ENCODE measurements at regions of chr2 and their contacts with region 1.

Region 1: DNA sequence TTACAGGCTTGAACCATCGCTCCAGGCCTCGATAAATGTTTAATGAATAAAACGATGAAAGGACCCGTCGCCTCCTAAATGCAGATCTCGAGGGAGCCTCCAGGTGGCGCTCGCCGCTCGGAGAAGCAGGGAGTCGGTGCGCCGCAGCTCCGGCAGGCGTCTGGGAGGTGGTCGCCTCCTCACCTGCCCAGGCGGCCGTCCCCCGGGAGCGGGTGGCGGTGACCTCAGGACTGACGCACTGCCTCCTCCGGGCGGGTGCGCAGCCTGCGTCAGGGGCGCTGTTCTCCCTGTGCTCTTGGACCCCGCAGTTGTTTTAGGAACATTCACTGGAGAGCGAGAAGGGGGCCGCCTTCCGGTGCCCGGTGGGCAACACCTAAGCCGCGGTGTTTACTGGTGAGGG is 38.6 kb upstream of the POLE4 start:
- DNase-seq: peak; percentile 69 to 82
- ATAC-seq: peak; percentile 73 to 88
- H3K4me3 ChIP-seq: peak overlapping the region; percentile 53
- H3K27ac ChIP-seq: peak overlapping the region; percentile 12 to 66; a peak in 3 of 6 replicates
- H3K4me1 ChIP-seq: peaks cover 6% of the 10 kb centered on the region
- CTCF ChIP-seq: peak; percentile 98
- EP300 ChIP-seq: no peak
- POLR2A ChIP-seq: no peak
- RAD21 ChIP-seq: peak; percentile 96 to 99

Region 2: DNA sequence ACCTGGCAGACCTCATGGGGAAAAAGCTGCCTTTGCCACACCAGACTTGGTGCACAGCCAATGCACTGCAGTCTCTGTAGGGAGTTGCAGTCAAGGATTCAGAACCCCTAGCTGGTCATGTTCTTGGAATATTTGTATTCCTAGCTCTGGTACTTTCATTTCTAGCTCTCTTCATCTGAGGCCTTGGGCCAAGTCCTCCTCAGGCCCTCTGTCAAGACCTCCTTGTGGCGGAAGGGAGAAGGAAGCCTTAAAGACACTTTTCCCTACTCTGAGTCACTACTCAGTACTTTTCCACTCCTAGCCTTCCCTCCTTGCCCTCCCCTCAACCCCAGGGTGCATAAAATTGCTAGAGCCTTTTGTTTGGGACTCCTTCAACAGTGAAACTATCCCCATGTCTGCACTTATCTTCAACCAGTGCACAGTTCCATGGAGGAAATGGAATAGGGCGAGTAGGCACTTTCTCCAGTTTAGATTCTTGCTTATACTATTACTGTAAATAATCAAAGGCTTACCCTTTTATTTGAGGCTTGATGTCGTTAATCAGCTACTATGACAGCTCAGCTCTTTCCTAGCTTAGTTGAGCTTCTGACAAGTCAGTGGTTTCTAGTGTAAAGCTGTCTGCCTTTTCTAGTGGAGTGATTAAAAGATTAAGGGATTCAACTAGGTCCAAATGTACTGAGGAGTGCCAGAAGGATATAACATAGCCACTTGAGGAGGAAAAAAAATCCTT is 287.5 kb before region 1 on chr2:
- CTCF ChIA-PET with region 1: no interaction called
- POLR2A ChIA-PET with region 1: no interaction called
- DNase-seq: peak; percentile 16 to 51
- ATAC-seq: peak; percentile 92
- H3K4me3 ChIP-seq: no peak overlapping the region
- H3K27ac ChIP-seq: peak overlapping the region in 1 of 2 experiments; percentile 15; a peak in 3 of 6 replicates
- H3K4me1 ChIP-seq: peaks cover 12% of the 10 kb centered on the region; the same call in 2 of the 3 replicates
- CTCF ChIP-seq: no peak
- EP300 ChIP-seq: no peak
- POLR2A ChIP-seq: no peak
- RAD21 ChIP-seq: no peak

Region 3: DNA sequence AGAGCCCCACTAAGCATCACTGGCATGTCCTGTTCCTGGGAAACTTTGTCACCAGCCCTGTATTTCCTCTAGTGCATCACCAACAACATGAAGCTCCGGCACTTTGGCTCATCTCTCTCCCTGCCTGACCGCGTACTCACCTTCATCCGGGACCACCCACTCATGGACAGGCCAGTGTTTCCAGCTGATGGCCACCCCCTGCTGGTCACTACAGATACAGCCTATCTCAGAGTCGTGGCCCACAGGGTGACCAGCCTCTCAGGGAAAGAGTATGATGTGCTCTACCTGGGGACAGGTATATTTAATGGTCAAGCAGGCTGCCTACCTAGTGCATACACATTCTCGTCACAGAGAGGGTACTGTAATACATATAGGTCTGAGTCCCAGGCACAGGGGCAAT is 244.7 kb before region 1 on chr2:
- CTCF ChIA-PET with region 1: no interaction called
- POLR2A ChIA-PET with region 1: no interaction called
- DNase-seq: no peak
- ATAC-seq: peak; percentile 26 to 72; a peak in 3 of 6 replicates
- H3K4me3 ChIP-seq: no peak overlapping the region
- H3K27ac ChIP-seq: no peak overlapping the region
- H3K4me1 ChIP-seq: no peaks in the 10 kb centered on the region
- CTCF ChIP-seq: no peak
- EP300 ChIP-seq: no peak
- POLR2A ChIP-seq: no peak
- RAD21 ChIP-seq: 0 out of 5 replicates have a peak, but pooled peaks of 1 of the 2 experiments have one; percentile 13

Region 4: DNA sequence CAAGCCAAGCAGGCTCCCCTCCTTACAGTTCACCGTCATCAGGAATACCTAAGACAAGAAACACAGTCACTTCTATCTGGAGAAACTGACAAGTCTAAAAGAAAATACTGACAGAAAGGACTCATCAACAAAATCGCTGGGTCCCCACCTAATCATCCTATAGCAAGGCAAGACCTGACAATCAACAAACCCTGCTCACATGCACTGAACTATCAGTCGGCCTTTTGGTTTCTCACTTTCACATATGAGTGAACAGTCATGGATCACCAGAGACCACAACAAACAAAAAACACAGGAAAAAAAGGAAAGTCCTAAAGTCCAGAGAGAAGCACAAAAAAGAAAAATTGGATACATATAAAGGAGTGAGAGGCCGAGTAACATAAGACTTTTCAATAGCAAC is 195.3 kb before region 1 on chr2:
- CTCF ChIA-PET with region 1: no interaction called
- POLR2A ChIA-PET with region 1: no interaction called
- DNase-seq: no peak
- ATAC-seq: no peak; a peak in 1 of 6 replicates
- H3K4me3 ChIP-seq: no peak overlapping the region
- H3K27ac ChIP-seq: no peak overlapping the region
- H3K4me1 ChIP-seq: no peaks in the 10 kb centered on the region
- CTCF ChIP-seq: no peak
- EP300 ChIP-seq: no peak
- POLR2A ChIP-seq: no peak
- RAD21 ChIP-seq: no peak

Region 5: GRCh38 chr2:74834792-74835752 is 84.8 kb before region 1 on chr2:
- CTCF ChIA-PET with region 1: no interaction called
- POLR2A ChIA-PET with region 1: no interaction called
- DNase-seq: peak in 1 of 2 experiments; percentile 31
- ATAC-seq: peak; percentile 37 to 66
- H3K4me3 ChIP-seq: peak overlapping the region; percentile 47
- H3K27ac ChIP-seq: peak overlapping the region; percentile 15 to 79; a peak in 5 of 6 replicates
- H3K4me1 ChIP-seq: peaks cover 7% of the 10 kb centered on the region; the same call in 1 of the 3 replicates
- CTCF ChIP-seq: no peak
- EP300 ChIP-seq: no peak
- POLR2A ChIP-seq: no peak
- RAD21 ChIP-seq: no peak

Region 6: GRCh38 chr2:74887445-74887951 is 32.3 kb before region 1 on chr2:
- CTCF ChIA-PET with region 1: interaction called, 10 read pairs
- POLR2A ChIA-PET with region 1: no interaction called
- DNase-seq: no peak
- ATAC-seq: peak in 1 of 2 experiments; percentile 22; a peak in 2 of 6 replicates
- H3K4me3 ChIP-seq: no peak overlapping the region
- H3K27ac ChIP-seq: no peak overlapping the region
- H3K4me1 ChIP-seq: peaks cover 11% of the 10 kb centered on the region; the same call in 2 of the 3 replicates
- CTCF ChIP-seq: no peak
- EP300 ChIP-seq: no peak
- POLR2A ChIP-seq: no peak
- RAD21 ChIP-seq: no peak

Region 7: GRCh38 chr2:74935975-74936391 is 16.2 kb after region 1 on chr2:
- CTCF ChIA-PET with region 1: interaction called, 25 read pairs
- POLR2A ChIA-PET with region 1: no interaction called
- DNase-seq: no peak
- ATAC-seq: peak in 1 of 2 experiments; percentile 51; a peak in 3 of 6 replicates
- H3K4me3 ChIP-seq: no peak overlapping the region
- H3K27ac ChIP-seq: 0 out of 6 replicates have a peak overlapping the region, but pooled peaks of 1 of the 2 experiments have one; percentile 8
- H3K4me1 ChIP-seq: peaks cover 33% of the 10 kb centered on the region
- CTCF ChIP-seq: no peak
- EP300 ChIP-seq: no peak
- POLR2A ChIP-seq: no peak
- RAD21 ChIP-seq: no peak

Region 8: DNA sequence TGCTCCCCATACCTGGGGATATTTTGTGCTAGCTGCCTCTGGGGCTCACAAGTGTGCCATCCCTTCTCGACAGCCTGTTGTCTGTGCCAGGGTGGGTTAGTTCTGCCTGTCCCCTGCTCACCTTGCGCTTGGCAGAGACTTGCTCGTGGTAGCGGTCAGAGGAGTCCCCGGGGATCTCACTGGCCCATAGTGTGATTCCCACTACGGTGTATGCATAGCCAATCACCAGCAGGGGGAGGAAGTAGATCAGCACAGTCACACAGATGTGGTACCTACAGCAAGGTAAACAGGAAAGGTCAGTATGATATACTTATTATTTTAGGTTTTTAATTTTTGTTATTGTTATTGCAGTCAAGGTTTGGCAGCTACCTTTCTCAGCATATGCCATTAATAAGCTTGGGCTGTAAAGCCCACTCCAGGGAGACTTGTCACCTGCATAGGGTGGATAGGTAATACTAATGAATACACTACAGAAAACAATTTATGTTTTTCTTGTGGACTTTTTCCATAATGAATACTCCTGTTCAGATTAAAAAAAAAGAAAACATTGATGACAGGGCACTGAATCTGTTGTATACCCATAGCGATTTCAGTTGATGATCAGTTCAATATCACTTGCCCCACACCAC is 133.8 kb after region 1 on chr2:
- CTCF ChIA-PET with region 1: interaction called, 20 read pairs
- POLR2A ChIA-PET with region 1: no interaction called
- DNase-seq: peak; percentile 52 to 62
- ATAC-seq: peak; percentile 98 to 100
- H3K4me3 ChIP-seq: no peak overlapping the region
- H3K27ac ChIP-seq: no peak overlapping the region
- H3K4me1 ChIP-seq: no peaks in the 10 kb centered on the region
- CTCF ChIP-seq: peak; percentile 74
- EP300 ChIP-seq: no peak
- POLR2A ChIP-seq: no peak
- RAD21 ChIP-seq: peak; percentile 70 to 83

Region 9: DNA sequence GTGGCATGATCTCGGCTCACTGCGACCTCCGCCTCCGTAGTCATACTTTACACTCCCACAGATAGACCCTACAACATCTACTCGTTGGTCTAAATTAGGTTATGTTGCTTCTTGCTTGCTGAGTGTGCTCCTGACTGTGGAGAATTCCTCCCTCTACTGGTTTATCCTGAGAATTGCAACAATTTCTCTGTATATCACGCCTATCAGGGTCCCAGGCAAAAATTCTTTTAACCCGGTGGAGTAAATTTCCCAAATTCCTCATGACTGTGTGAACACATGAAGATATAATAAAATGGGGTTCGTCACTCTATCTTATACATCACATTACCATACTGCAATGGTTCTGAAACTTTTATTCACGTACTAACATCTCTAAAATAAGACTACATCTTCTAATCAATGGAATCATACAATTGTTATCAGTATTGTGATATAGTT is 484.2 kb after region 1 on chr2:
- CTCF ChIA-PET with region 1: interaction called, 16 read pairs
- POLR2A ChIA-PET with region 1: no interaction called
- DNase-seq: peak; percentile 17 to 65
- ATAC-seq: peak; percentile 98 to 99
- H3K4me3 ChIP-seq: no peak overlapping the region
- H3K27ac ChIP-seq: no peak overlapping the region
- H3K4me1 ChIP-seq: no peaks in the 10 kb centered on the region
- CTCF ChIP-seq: peak; percentile 97
- EP300 ChIP-seq: no peak
- POLR2A ChIP-seq: no peak
- RAD21 ChIP-seq: peak; percentile 93 to 96

Measured in A549 (cell line).